ENCODE measurements at regions of chr12 and their contacts with region 1.

Region 1: GRCh38 chr12:92558806-92559205 is 144.0 kb upstream of the PLEKHG7 start:
- DNase-seq: no peak
- H3K4me3 ChIP-seq: no peak overlapping the region
- H3K4me3 Mint-ChIP-seq: no peak overlapping the region
- H3K27ac Mint-ChIP-seq: no peak overlapping the region
- H3K4me1 ChIP-seq: peaks cover 14% of the 10 kb centered on the region
- H3K4me1 Mint-ChIP-seq: peaks cover 19% of the 10 kb centered on the region
- H3K27me3 ChIP-seq: no peaks in the 10 kb centered on the region
- H3K27me3 Mint-ChIP-seq: no peaks in the 10 kb centered on the region
- CTCF ChIP-seq: no peak

Region 2: GRCh38 chr12:92546635-92547348 is 12.0 kb before region 1 on chr12:
- CTCF ChIA-PET with region 1: no interaction called
- POLR2A ChIA-PET with region 1: no interaction called
- intact Hi-C with region 1: loop called (anchors 1 kb)
- DNase-seq: peak in 1 of 2 experiments; percentile 37
- H3K4me3 ChIP-seq: no peak overlapping the region
- H3K4me3 Mint-ChIP-seq: no peak overlapping the region
- H3K27ac Mint-ChIP-seq: no peak overlapping the region
- H3K4me1 ChIP-seq: peaks cover 27% of the 10 kb centered on the region; the same call in 1 of the 2 replicates
- H3K4me1 Mint-ChIP-seq: peaks cover 13% of the 10 kb centered on the region
- H3K27me3 ChIP-seq: no peaks in the 10 kb centered on the region
- H3K27me3 Mint-ChIP-seq: no peaks in the 10 kb centered on the region
- CTCF ChIP-seq: no peak